CD4-positive, alpha-beta memory T cell (primary cell): ENCODE measurements at regions of chr12 and their contacts with region 1.

Region 1: DNA sequence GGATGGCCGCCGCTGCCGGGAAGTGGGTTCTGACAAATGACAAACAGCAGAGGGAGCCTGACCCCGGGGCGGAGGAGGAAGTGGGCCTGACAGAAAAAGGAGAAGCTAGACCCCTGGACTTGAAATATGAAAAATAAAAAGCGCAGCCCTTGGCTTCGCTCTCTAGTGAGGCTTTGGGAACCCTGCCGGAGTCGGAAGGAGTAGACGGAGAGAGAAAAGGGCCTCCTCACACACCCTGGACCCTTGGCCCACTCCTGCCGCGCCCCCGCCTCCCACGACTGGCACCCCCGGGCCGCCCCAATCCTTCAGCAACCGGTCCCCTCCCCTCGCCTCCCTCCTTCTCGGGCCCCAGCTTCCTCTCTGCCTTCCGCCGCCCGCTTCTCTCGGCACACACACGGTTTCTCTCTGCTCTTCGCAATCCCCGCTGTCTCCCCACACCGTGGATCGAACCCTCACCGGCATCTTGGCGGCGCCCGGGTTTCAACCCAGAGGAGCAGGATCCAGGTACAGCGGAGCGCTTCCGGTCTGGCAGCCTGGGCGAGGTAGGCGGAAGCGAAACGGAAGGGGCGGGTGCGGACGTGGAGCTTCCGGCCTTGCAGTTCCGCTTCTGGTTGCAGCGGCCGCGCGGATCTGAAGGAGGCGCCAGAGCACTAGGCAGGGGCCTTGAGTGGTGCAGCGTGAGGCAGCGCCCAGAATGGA is at the start of gene ARPC3:
- DNase-seq: peak; percentile 94 to 96 (median 94)
- H3K4me3 ChIP-seq: peak within 1 kb of the TSS; percentile 76 to 90
- H3K4me3 Mint-ChIP-seq: peak within 1 kb of the TSS; percentile 99 to 100 (median 100)
- H3K27ac ChIP-seq: peak within 1 kb of the TSS; percentile 97
- H3K27ac Mint-ChIP-seq: peak within 1 kb of the TSS; percentile 99 to 100 (median 99)
- H3K4me1 ChIP-seq: peaks cover 34% of the 10 kb centered on the region
- H3K4me1 Mint-ChIP-seq: peaks cover 17 to 47% (median 38%) of the 10 kb centered on the region in 4 donors
- H3K27me3 ChIP-seq: no peaks in the 10 kb centered on the region
- H3K27me3 Mint-ChIP-seq: no peaks in the 10 kb centered on the region
- total RNA-seq, gene ARPC3: 191 to 203 TPM

Region 2: DNA sequence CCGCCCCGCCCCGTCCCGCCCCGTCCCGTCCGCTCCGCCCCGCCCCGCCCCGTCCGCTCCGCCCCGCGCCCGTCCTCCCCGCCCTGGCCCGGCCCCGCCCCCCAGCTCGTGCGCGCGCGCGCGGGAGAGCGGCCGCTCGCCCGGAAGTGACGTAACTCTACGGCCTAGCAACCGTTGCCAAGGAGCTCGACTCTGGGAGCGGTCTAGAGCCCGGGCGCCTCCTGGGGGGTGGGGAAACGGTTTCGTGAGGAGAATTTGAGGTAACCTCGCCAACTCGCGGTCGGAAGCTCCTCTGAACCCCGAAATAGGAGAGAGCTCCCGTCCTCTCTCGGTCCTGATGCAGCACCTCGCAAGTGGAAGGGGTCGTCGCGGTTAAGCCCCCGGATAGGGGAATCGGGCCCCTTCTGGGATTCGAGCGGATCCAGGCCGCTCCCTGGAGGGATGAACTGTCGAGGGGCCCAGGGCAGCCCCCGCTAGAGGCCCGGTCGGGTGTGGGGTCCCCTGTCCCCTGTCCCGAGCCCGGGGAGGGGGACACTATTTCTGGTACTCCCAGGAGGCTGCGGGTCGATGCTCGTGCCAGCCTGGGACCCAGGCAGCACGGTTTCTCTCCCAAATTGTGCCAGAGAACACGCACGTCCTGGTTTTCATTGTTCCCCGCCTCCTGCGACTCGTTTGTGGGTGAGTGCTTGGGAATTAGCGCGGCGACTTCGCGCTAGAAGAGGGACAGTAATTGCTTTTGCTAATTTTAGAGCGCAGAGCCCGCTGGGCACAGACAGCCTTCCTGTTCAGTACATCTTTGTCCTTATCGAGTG is 325.6 kb before region 1 on chr12 and contains the start of gene IFT81:
- CTCF ChIA-PET with region 1: no interaction called
- POLR2A ChIA-PET with region 1: interaction called, 15 read pairs
- intact Hi-C with region 1: no loop called
- DNase-seq: peak; percentile 92 to 95 (median 93)
- H3K4me3 ChIP-seq: peak within 1 kb of the TSS; percentile 70 to 89
- H3K4me3 Mint-ChIP-seq: peak within 1 kb of the TSS; percentile 91 to 96 (median 94)
- H3K27ac ChIP-seq: peak within 1 kb of the TSS; percentile 72
- H3K27ac Mint-ChIP-seq: peak within 1 kb of the TSS; percentile 76 to 97 (median 95)
- H3K4me1 ChIP-seq: peaks cover 10% of the 10 kb centered on the region
- H3K4me1 Mint-ChIP-seq: peaks cover 3 to 15% (median 8%) of the 10 kb centered on the region in 4 donors
- H3K27me3 ChIP-seq: no peaks in the 10 kb centered on the region
- H3K27me3 Mint-ChIP-seq: peaks cover 5 to 10% of the 10 kb centered on the region in 2 donors
- total RNA-seq, gene IFT81: 1.1 to 1.3 TPM

Region 3: GRCh38 chr12:110468212-110469048 is 18.5 kb after region 1 on chr12 and contains the starts of genes FAM216A and GPN3:
- CTCF ChIA-PET with region 1: interaction called, 139 read pairs
- POLR2A ChIA-PET with region 1: interaction called, 143 read pairs
- intact Hi-C with region 1: loop called (anchors 1 kb)
- DNase-seq: peak; percentile 97 to 98 (median 98)
- H3K4me3 ChIP-seq: peak within 1 kb of the TSS; percentile 93 to 97
- H3K4me3 Mint-ChIP-seq: peak within 1 kb of the TSS; percentile 96 to 100 (median 98)
- H3K27ac ChIP-seq: peak within 1 kb of the TSS; percentile 75
- H3K27ac Mint-ChIP-seq: peak within 1 kb of the TSS; percentile 91 to 98 (median 96)
- H3K4me1 ChIP-seq: peaks cover 25% of the 10 kb centered on the region
- H3K4me1 Mint-ChIP-seq: peaks cover 17 to 45% (median 34%) of the 10 kb centered on the region in 4 donors
- H3K27me3 ChIP-seq: no peaks in the 10 kb centered on the region
- H3K27me3 Mint-ChIP-seq: no peaks in the 10 kb centered on the region
- total RNA-seq, gene FAM216A: 16.4 to 16.9 TPM
- total RNA-seq, gene GPN3: 12.5 to 16.6 TPM

Region 4: DNA sequence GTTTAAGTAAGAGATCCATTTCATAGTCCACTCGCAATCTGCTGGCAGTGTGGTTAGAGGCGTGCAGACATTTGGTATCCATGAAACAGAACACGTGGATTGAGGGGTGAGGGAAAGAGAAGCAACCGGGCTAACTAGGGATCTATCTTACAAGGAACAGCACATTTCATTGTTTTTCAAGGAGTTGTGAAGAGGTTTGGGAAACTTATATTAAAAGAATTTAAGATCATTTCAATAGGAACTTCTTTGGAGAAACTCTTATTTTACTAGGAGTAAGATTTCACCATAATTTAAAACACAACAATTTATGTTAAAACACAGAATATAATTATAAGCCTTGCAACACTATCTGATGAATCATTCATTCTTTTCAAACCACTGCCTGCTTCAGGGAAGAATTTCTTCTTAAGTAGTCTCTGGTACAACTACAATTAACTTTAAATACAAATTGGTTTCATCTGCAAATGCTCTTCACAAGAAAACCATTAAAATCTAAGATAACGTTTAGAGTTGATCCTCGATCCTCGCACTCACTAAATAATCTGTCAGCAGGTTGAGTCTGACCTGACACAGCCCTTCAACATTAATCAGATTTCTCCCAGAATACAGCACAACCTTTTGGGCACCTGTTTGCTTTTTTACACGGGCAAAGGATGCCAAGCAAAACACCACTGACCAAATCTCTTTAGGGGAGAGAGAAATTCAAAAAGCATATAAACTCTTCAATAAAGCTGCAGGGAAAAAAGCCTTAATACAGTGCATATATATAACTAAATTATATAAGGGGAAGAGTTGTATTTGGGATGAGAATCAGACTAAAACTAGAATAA is 105.8 kb after region 1 on chr12:
- CTCF ChIA-PET with region 1: interaction called, 13 read pairs
- POLR2A ChIA-PET with region 1: interaction called, 3 read pairs
- intact Hi-C with region 1: loop called (anchors 2 kb)
- DNase-seq: no peak
- H3K4me3 ChIP-seq: no peak overlapping the region
- H3K4me3 Mint-ChIP-seq: peak overlapping the region in 1 of 8 donors; percentile 3
- H3K27ac ChIP-seq: no peak overlapping the region
- H3K27ac Mint-ChIP-seq: peak overlapping the region in 4 of 7 donors; percentile 17 to 71 (median 25)
- H3K4me1 ChIP-seq: peaks cover 44% of the 10 kb centered on the region
- H3K4me1 Mint-ChIP-seq: peaks cover 35 to 62% (median 51%) of the 10 kb centered on the region in 4 donors
- H3K27me3 ChIP-seq: no peaks in the 10 kb centered on the region
- H3K27me3 Mint-ChIP-seq: no peaks in the 10 kb centered on the region

Region 5: GRCh38 chr12:110606253-110606611 is 156.3 kb after region 1 on chr12:
- CTCF ChIA-PET with region 1: interaction called, 140 read pairs
- POLR2A ChIA-PET with region 1: interaction called, 38 read pairs
- intact Hi-C with region 1: loop called (anchors 1 kb)
- DNase-seq: no peak
- H3K4me3 ChIP-seq: peak overlapping the region in 1 of 2 donors; percentile 65
- H3K4me3 Mint-ChIP-seq: peak overlapping the region; percentile 78 to 93 (median 88)
- H3K27ac ChIP-seq: no peak overlapping the region
- H3K27ac Mint-ChIP-seq: peak overlapping the region in 6 of 7 donors; percentile 66 to 90 (median 74)
- H3K4me1 ChIP-seq: peaks cover 6% of the 10 kb centered on the region
- H3K4me1 Mint-ChIP-seq: peaks cover 2 to 9% (median 4%) of the 10 kb centered on the region in 4 donors
- H3K27me3 ChIP-seq: no peaks in the 10 kb centered on the region
- H3K27me3 Mint-ChIP-seq: no peaks in the 10 kb centered on the region

Region 6: GRCh38 chr12:110698171-110698902 is 248.4 kb after region 1 on chr12:
- CTCF ChIA-PET with region 1: interaction called, 3 read pairs
- POLR2A ChIA-PET with region 1: interaction called, 3 read pairs
- intact Hi-C with region 1: loop called (anchors 1 kb)
- DNase-seq: peak; percentile 75 to 80 (median 78)
- H3K4me3 ChIP-seq: no peak overlapping the region
- H3K4me3 Mint-ChIP-seq: peak overlapping the region in 2 of 8 donors; percentile 46 to 48
- H3K27ac ChIP-seq: no peak overlapping the region
- H3K27ac Mint-ChIP-seq: peak overlapping the region in 4 of 7 donors; percentile 45 to 90 (median 64)
- H3K4me1 ChIP-seq: peaks cover 9% of the 10 kb centered on the region
- H3K4me1 Mint-ChIP-seq: peaks cover 4 to 11% (median 6%) of the 10 kb centered on the region in 4 donors
- H3K27me3 ChIP-seq: no peaks in the 10 kb centered on the region
- H3K27me3 Mint-ChIP-seq: no peaks in the 10 kb centered on the region

Region 7: DNA sequence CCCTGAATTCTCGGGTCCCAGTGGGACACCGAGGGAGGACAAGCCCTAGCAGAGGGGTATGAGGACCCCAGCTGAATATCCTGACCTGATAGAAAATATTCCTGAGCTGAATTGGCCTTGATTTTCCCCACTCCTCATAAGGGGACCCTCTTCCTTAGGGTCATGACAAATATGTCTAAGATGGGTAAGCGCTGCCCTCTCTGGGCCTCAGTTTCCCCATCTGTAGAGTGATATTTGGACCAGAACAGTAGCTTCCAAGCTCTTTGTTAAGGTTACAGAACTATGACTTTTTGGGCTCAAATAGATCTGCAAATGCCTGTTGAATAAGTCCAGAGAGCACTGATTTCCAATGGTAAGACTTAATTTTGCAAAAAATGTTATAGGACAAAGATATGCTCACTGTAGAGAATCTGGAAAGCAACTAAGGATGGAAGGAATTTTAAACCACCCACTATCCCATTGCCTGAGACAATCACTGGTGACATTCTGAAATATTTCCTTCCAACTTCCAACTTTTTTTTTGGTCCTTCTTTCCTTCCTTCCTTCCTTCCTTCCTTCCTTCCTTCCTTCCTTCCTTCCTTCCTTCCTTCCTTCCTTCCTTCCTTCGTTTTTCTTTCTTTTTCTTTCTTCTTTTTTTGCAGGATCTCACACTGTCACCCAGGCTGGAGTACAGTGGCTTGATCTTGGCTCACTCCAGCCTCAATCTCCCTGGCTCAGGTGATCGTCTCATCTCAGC is 438.5 kb after region 1 on chr12:
- CTCF ChIA-PET with region 1: interaction called, 3 read pairs
- POLR2A ChIA-PET with region 1: interaction called, 10 read pairs
- intact Hi-C with region 1: loop called (anchors 1 kb)
- DNase-seq: no peak
- H3K4me3 ChIP-seq: peak overlapping the region in 1 of 2 donors; percentile 86
- H3K4me3 Mint-ChIP-seq: peak overlapping the region in 6 of 8 donors; percentile 94 to 96 (median 94)
- H3K27ac ChIP-seq: no peak overlapping the region
- H3K27ac Mint-ChIP-seq: peak overlapping the region in 4 of 7 donors; percentile 29 to 92 (median 81)
- H3K4me1 ChIP-seq: peaks cover 3% of the 10 kb centered on the region
- H3K4me1 Mint-ChIP-seq: peaks cover 3 to 8% (median 4%) of the 10 kb centered on the region in 4 donors
- H3K27me3 ChIP-seq: peaks cover 4% of the 10 kb centered on the region
- H3K27me3 Mint-ChIP-seq: peaks cover 2 to 4% of the 10 kb centered on the region in 2 donors